ENCODE measurements at regions of chr1 and their contacts with region 1.

Region 1: DNA sequence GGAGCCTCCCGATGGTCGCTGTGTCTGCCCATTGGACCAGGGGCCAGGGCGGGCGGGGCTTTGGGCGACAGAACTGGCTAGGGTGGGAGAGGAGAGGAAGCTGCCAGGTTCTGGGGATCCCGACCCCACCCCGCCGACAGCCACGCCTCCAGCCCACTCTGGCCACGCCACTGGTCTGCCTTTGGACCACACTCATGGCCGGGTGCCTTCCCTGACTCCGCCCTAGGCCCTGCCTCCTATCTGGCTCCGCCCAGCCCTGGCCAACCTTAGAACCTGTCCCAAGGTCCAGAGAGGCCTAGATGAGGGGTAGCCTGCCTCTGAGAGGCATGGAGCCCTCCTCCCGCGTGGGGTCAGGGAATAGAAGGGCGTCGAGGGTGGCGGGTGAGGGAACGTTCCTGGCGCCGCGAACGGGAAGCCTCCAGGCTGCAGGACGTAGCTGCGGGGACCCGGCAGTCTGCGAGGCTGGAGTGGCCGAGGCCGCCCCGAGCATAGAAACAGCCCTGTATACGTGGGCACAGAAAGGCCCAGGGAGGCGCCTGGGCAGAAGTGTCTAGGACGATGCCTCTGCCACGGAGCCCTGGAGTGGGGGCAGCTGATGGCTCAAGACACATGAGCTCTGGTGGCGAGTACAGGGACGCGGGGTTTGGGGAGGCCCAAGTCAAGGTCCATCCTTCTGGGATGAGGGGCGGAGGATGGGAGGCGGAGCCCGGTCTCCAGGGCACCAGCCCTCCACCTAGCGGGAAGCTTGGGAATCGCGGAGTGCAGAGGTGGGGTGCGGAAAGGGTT is 11.5 kb upstream of the COL16A1 start:
- DNase-seq: peak; percentile 74
- CTCF ChIP-seq: peak; percentile 57

Region 2: GRCh38 chr1:31633053-31633452 is 82.2 kb before region 1 on chr1:
- CTCF ChIA-PET with region 1: no interaction called
- POLR2A ChIA-PET with region 1: no interaction called
- DNase-seq: no peak
- CTCF ChIP-seq: peak; percentile 29

Region 3: GRCh38 chr1:31705080-31705866 is 10.0 kb before region 1 on chr1:
- CTCF ChIA-PET with region 1: interaction called, 61 read pairs
- POLR2A ChIA-PET with region 1: no interaction called
- DNase-seq: peak; percentile 79
- CTCF ChIP-seq: peak; percentile 76

Region 4: GRCh38 chr1:31736671-31737070 is 21.4 kb after region 1 on chr1:
- CTCF ChIA-PET with region 1: interaction called, 25 read pairs
- POLR2A ChIA-PET with region 1: no interaction called
- DNase-seq: no peak
- CTCF ChIP-seq: no peak

Region 5: DNA sequence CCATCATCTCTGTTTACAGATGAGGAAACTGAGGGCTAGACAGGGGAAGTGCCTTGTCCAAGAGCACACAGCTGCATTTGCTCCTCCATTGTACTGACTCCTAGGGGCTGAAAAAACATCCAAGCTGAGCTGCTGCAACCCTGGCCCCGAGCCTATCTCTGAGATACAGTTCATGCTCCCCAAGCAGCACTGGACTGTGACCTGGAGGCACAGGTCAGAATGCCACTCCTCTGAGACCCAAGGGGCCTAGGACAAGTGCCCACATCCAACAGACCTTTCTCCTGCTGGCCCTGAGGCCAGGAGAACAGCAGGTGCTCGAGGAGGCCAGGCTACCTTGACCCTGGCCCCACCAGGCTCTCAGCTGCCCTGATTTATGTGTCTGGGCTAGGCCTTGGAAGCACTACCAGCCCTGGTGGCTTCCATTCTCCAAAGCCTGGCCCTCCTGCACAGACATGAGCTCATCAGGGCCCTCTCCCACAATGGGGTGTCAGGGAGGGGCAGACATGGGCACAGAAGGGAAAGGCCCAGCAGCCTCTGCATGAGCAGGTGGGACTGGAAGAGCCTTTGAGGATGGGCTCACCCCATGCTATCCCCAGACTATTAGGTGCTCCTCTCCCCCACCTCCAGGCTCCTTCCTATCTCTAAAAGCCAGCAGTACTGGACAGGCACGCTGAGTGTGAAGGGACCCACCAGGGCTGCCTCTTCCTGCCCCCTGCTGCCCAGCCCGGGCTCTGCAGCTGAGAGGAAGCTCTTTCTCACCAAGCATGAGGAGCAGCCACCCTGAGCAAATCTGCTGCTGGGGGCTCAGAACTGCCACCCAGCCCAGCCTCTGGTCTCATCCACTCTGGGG is 30.0 kb after region 1 on chr1:
- CTCF ChIA-PET with region 1: interaction called, 20 read pairs
- POLR2A ChIA-PET with region 1: no interaction called
- DNase-seq: peak; percentile 87
- CTCF ChIP-seq: peak; percentile 74

Region 6: GRCh38 chr1:31757204-31757679 is 42.0 kb after region 1 on chr1:
- CTCF ChIA-PET with region 1: no interaction called
- POLR2A ChIA-PET with region 1: no interaction called
- DNase-seq: no peak
- CTCF ChIP-seq: no peak

Measured in GM10248 (cell line).